GM12878 (cell line): ENCODE measurements at regions of chr3 and their contacts with region 1.

Region 1: DNA sequence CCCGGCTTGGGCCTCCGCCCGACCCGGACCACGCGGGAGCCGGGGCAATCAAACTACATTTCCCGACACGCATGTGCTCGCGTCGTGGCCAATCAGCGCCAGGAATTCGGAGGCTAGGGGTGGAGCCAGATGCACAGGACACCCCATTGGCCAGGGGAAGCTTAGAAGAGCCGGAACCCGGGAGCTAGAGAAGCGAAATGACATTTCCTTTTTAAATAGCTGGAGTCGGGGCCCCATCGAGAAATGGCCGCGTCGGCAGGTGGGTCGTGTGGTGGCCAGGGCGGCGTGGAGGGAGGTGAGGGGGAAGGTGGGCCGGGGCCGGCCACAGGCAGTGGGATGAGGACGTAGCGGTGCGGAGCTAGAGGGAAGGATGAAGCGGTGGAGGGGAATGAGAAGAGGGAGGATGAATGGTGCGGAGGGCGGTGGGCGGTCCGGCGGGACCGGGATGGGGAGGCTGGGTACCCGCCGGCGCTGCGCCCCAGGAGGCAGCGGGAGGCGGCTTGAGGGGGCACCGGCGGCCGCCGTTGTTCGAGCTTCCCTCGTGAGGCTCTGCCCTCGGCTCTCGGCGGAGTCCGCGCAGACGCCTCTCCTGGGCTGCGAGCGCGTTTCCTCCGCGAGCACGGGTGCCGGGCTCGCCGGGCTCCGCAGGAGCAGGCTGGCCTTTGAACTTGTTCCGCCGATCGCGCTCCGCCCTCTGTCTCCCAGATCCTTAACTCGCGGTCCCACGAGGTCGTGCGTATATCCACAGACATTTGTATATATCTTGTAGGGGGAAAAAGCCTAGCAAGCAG is at the start of gene KBTBD8:
- DNase-seq: peak; percentile 96
- ATAC-seq: peak; percentile 93
- H3K4me3 ChIP-seq: peak within 1 kb of the TSS; percentile 92
- H3K27ac ChIP-seq: peak within 1 kb of the TSS; percentile 74
- H3K4me1 ChIP-seq: peaks cover 8% of the 10 kb centered on the region; the same call in 1 of the 2 replicates
- H3K27me3 ChIP-seq: no peaks in the 10 kb centered on the region
- CTCF ChIP-seq: no peak
- EP300 ChIP-seq: no peak
- POLR2A ChIP-seq: peak; percentile 74; the same call in 1 of the 2 replicates
- RAD21 ChIP-seq: no peak
- polyA plus RNA-seq, gene KBTBD8: 8.5 to 9.2 TPM

Region 2: DNA sequence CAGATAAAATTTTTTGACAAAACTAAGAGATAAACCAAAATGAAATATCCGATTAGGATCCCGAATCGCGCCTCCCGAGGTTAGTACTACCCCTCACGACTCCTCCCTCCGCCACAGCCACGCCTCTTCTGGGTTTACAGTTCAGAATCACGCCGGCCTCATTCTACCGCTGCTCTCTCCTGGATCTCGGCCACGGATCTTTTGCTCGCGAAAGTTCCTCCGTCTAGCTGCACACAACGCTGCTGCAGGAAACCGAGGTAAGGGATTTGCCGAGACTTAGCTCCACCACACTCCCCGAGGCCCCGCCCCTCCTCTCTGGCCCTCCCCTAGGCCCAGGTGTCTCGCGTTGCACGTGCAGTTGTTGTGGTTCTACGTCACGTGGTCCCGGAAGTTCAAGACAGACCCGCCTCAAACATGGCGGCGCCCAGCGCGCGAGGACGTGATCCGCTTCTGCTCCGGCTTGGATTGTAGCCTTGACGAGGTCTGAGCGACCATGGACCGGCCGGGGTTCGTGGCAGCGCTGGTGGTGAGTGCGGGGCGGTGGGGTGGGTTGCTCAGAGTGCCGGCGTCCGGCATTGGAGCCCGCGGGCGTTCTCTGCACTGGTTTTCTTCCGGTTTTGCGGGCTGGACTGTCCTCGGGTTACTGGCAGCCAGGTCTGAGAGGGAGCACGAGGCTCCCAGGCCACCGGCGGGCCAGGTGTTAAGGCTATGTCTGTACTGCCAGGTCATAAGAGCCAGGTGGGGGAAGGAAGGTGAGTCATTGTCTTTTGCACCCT is 777.5 kb before region 1 on chr3 and contains the start of gene SLC25A26:
- CTCF ChIA-PET with region 1: no interaction called
- POLR2A ChIA-PET with region 1: no interaction called
- RAD21 ChIA-PET with region 1: no interaction called
- SMC1A ChIA-PET with region 1: no interaction called
- in situ Hi-C with region 1: no loop called
- intact Hi-C with region 1: loop called (anchors 10 kb)
- DNase-seq: peak; percentile 82
- ATAC-seq: peak; percentile 99
- H3K4me3 ChIP-seq: peak within 1 kb of the TSS; percentile 91
- H3K27ac ChIP-seq: peak within 1 kb of the TSS; percentile 78
- H3K4me1 ChIP-seq: no peaks in the 10 kb centered on the region
- H3K27me3 ChIP-seq: no peaks in the 10 kb centered on the region
- CTCF ChIP-seq: no peak
- EP300 ChIP-seq: no peak
- POLR2A ChIP-seq: peak; percentile 99
- RAD21 ChIP-seq: no peak
- polyA plus RNA-seq, gene SLC25A26: 44.1 to 49.7 TPM

Region 3: DNA sequence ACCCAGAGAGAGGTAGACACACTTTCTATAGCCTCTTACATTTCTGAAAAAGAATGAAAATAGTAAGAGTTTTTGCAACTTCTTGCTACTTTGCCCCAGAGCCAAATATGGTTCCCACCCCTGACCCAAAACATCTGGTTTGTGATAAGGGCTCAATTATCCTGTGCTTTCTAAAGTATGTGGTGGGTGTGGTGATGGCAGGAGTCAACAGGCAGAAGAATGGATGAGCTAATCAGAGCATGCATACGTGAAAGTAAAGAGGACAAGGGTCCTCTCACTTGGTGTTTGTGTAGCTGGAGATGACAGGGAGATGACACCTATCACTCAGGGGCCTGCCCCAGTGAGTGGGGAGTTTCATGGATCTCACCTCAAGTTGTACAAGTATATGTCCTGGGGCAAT is 18.9 kb after region 1 on chr3:
- CTCF ChIA-PET with region 1: interaction called, 4 read pairs
- POLR2A ChIA-PET with region 1: interaction called, 9 read pairs
- RAD21 ChIA-PET with region 1: interaction called, 3 read pairs
- SMC1A ChIA-PET with region 1: interaction called, 11 read pairs
- in situ Hi-C with region 1: no loop called
- intact Hi-C with region 1: loop called (anchors 1 kb)
- DNase-seq: no peak
- ATAC-seq: peak; percentile 50
- H3K4me3 ChIP-seq: no peak overlapping the region; the same call in 1 of the 2 replicates
- H3K27ac ChIP-seq: peak overlapping the region; percentile 20
- H3K4me1 ChIP-seq: peaks cover 38% of the 10 kb centered on the region
- H3K27me3 ChIP-seq: no peaks in the 10 kb centered on the region
- CTCF ChIP-seq: no peak
- EP300 ChIP-seq: no peak
- POLR2A ChIP-seq: no peak
- RAD21 ChIP-seq: no peak

Region 4: GRCh38 chr3:67048067-67048714 is 49.9 kb after region 1 on chr3:
- CTCF ChIA-PET with region 1: interaction called, 11 read pairs
- POLR2A ChIA-PET with region 1: interaction called, 10 read pairs
- RAD21 ChIA-PET with region 1: interaction called, 47 read pairs
- SMC1A ChIA-PET with region 1: interaction called, 36 read pairs
- in situ Hi-C with region 1: no loop called
- intact Hi-C with region 1: loop called (anchors 1 kb)
- DNase-seq: peak; percentile 47
- ATAC-seq: peak; percentile 94
- H3K4me3 ChIP-seq: no peak overlapping the region
- H3K27ac ChIP-seq: peak overlapping the region; percentile 54
- H3K4me1 ChIP-seq: peaks cover 24% of the 10 kb centered on the region
- H3K27me3 ChIP-seq: no peaks in the 10 kb centered on the region
- CTCF ChIP-seq: no peak
- EP300 ChIP-seq: peak in 1 of 2 experiments; percentile 78; a peak in 3 of 4 replicates
- POLR2A ChIP-seq: no peak
- RAD21 ChIP-seq: no peak

Region 5: GRCh38 chr3:67228141-67228540 is 229.8 kb after region 1 on chr3:
- CTCF ChIA-PET with region 1: no interaction called
- POLR2A ChIA-PET with region 1: no interaction called
- RAD21 ChIA-PET with region 1: no interaction called
- SMC1A ChIA-PET with region 1: no interaction called
- in situ Hi-C with region 1: no loop called
- intact Hi-C with region 1: no loop called
- DNase-seq: no peak
- ATAC-seq: no peak
- H3K4me3 ChIP-seq: no peak overlapping the region
- H3K27ac ChIP-seq: no peak overlapping the region
- H3K4me1 ChIP-seq: no peaks in the 10 kb centered on the region
- H3K27me3 ChIP-seq: 0 out of 4 replicates have a peak, but pooled peaks cover 0 to 1% of the 10 kb centered on the region in 2 experiments
- CTCF ChIP-seq: no peak
- EP300 ChIP-seq: no peak
- POLR2A ChIP-seq: no peak
- RAD21 ChIP-seq: no peak